ENCODE measurements at regions of chr14 and their contacts with region 1.

Region 1: GRCh38 chr14:21103710-21104447 is 3.0 kb downstream of the TMEM253 start:
- DNase-seq: peak in 1 of 2 donors; percentile 97
- H3K4me3 ChIP-seq: peak overlapping the region; percentile 67 to 72
- H3K27ac ChIP-seq: peak overlapping the region; percentile 99
- H3K4me1 ChIP-seq: peaks cover 57% of the 10 kb centered on the region
- H3K27me3 ChIP-seq: no peaks in the 10 kb centered on the region
- CTCF ChIP-seq: peak; percentile 18 to 86 (median 47)
- POLR2A ChIP-seq: peak; percentile 17 to 85

Region 2: DNA sequence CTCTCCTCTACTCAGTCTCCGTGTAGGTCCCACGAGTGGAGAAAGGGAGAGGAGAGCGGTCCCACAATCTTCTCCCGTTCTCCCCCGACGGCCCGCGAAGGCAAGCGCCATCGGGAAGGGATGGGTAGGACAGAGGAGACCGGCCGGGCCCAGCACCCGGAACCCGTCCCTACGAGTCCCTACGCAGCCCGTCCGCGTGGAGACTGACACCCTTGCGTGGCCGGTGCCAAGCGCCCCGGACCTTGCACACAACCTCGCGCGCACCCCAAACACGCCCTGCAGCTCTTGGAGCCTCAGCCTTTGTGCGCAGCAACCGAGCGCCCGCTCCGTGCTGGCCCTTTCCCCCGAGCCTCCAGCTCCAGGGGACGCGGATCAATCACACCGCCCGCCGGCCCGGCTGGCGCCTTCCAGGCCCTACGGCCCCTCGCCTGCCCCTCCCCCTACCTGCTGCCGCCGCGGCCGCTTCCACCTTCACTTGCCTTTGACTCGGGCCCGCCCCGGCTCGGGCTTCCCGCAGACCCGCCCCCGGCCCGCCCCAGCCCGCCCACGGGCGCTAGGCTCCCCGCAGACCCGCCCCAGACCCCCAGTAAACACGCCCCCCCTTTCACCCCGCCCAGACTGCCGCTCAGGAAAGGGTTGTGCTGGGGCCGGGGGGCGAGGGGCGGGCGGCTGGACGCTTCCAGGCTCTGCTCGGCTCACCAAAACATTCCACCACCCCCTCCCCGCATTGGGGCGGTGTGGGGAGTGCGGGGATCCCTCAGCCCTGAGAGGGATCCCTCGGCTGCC is 79.1 kb before region 1 on chr14 and contains the start of gene NDRG2:
- intact Hi-C with region 1: loop called (anchors 5 kb)
- DNase-seq: peak in 1 of 2 donors; percentile 89
- H3K4me3 ChIP-seq: peak within 1 kb of the TSS; percentile 72 to 96
- H3K27ac ChIP-seq: peak within 1 kb of the TSS; percentile 99
- H3K4me1 ChIP-seq: peaks cover 67% of the 10 kb centered on the region
- H3K27me3 ChIP-seq: no peaks in the 10 kb centered on the region
- CTCF ChIP-seq: peak in 1 of 3 experiments; percentile 27
- POLR2A ChIP-seq: peak; percentile 36 to 59
- total RNA-seq, gene NDRG2: 307 TPM

Region 3: DNA sequence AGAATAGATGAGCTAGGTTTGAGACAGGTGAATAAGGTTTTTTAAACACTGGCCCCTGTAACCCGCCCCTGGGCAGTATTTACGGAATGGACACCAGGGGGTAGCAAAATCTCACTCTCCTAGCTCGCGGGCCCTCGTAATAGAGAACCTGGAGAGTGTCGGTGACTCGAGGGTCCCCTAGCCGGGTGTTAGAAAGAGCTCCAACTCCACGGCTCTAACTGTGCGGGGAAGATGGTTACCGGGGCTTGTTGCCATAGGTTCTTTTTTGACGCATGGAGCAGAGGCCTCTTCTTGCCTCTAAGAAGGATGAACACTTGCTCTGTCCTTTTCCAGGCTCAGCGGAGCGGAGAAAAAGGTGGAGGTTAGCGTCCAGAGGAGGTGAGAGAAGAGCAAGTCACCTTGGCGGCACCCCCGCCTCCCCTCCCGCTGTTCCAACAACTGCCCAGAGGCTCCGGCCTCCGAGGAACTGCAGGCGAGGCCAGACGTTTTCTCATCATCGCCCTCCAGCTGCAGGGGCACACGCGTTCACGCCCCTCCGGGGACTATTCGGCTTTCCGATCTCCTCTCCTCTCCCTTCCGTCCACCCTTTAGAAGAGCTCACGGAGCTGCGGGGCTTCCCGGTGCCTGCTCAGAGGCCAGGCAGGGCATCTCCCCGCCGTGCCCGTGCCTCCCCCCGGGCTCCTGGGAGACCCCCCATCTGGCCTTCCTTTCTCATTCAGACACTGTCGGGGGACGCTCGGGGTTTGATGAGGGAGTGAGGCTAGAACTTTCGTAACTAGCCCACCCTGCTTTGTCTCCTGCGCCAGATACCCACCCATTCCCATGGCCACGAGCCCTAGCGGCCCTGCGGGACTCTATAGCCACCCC is 35.1 kb before region 1 on chr14:
- intact Hi-C with region 1: loop called (anchors 1 kb)
- DNase-seq: no peak
- H3K4me3 ChIP-seq: peak overlapping the region; percentile 71 to 73
- H3K27ac ChIP-seq: peak overlapping the region; percentile 95
- H3K4me1 ChIP-seq: peaks cover 45% of the 10 kb centered on the region
- H3K27me3 ChIP-seq: no peaks in the 10 kb centered on the region
- CTCF ChIP-seq: peak in 2 of 3 experiments; percentile 68 to 75
- POLR2A ChIP-seq: no peak

Region 4: GRCh38 chr14:21121106-21121505 is 17.2 kb after region 1 on chr14:
- intact Hi-C with region 1: no loop called
- DNase-seq: no peak
- H3K4me3 ChIP-seq: no peak overlapping the region
- H3K27ac ChIP-seq: no peak overlapping the region
- H3K4me1 ChIP-seq: no peaks in the 10 kb centered on the region
- H3K27me3 ChIP-seq: no peaks in the 10 kb centered on the region
- CTCF ChIP-seq: no peak
- POLR2A ChIP-seq: no peak

Region 5: DNA sequence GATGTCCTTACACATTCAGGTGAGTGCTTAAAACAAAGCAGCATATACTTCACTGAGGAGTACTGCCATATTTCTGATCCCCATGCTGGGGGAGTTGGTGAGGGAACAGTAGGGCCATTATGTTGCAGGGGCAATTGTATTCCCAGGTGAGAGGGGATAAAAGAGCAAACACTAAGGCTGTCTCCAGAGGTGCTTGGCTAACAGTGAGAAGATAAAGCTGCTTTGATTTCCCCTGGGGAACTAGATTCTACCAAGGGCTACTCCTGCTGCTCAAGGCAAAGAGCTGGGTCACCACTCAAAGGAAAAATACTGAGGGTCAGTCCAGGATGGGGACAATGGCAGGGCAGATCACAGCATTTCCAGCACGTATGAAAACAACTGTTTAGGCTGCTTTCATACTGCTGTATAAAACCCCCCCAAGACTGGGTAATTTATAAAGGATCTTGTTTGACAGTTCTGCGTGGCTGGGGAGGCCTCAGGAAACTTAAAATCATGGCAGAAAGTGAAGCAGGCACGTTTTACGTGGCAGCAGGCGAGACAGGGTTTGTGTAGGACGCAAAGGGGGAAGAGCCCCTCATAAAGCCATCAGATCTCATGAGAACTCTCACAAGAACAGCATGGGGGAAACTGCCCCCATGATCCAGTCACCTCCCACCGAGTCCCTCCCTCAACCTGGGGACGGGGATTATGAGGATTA is 99.7 kb after region 1 on chr14:
- intact Hi-C with region 1: no loop called
- DNase-seq: no peak
- H3K4me3 ChIP-seq: no peak overlapping the region
- H3K27ac ChIP-seq: no peak overlapping the region
- H3K4me1 ChIP-seq: no peaks in the 10 kb centered on the region
- H3K27me3 ChIP-seq: no peaks in the 10 kb centered on the region
- CTCF ChIP-seq: no peak
- POLR2A ChIP-seq: no peak

Region 6: DNA sequence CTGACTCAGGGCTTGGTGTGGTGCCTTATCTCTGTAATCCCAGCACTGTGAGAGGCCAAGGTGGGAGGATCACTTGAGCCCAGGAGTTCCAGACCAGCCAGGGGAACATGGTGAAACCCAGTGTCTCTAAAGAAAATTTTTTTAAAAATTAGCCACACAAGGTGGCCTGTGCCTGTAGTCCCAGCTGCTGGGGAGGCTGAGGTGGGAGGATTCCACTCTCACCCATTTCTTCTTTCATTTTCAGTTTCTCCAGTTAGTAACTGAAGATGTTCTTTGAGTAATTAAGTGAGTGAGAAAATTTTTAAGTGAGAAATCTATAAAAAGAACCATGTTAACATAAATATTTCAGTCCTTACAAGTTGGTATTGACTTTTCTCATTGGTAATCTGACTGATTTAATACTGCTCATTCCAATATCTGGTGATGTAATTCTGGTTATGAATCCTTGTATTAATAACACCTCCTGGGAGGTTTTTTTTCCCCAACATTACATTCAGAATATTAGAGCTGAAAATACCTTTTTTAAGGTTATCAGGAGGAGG is 401.2 kb after region 1 on chr14:
- intact Hi-C with region 1: no loop called
- DNase-seq: no peak
- H3K4me3 ChIP-seq: no peak overlapping the region
- H3K27ac ChIP-seq: no peak overlapping the region
- H3K4me1 ChIP-seq: peaks cover 23% of the 10 kb centered on the region
- H3K27me3 ChIP-seq: no peaks in the 10 kb centered on the region
- CTCF ChIP-seq: no peak
- POLR2A ChIP-seq: no peak

Measured in vagina (tissue), 2 donors.